ENCODE measurements at regions of chr20 and their contacts with region 1.

Region 1: DNA sequence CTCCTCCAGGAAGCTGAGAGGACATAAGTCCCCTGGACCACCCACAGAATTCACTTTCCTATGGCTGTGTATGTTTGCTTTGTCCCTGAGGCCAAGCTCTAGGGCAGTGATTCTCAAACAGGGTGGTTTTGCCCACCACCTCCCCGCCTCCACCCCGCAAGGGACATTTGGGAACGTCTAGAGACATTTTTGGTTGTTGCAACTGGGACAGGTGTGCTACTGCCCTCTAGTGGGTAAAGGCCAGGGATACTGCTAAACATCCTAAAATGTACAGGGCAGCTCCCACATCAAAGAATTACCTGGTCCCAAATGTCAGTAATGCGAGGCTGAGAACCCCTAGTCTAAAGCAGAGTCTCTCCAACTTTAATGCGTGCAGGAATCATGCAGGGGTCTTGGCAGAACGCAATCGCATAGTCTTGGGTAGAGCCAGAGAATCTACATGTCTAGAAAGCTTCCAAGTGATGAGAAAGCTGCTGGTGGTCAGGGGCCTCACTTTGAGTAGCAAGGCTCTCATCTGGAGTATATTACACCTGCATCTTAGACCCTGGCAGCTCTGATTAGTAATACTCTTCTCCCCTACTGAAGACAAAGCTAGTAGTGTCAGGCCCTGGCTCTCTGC is 5.1 kb downstream of the KCNS1 start:
- DNase-seq: no peak
- H3K4me3 ChIP-seq: no peak overlapping the region
- H3K27ac ChIP-seq: no peak overlapping the region
- H3K4me1 ChIP-seq: peaks cover 0 to 17% (median 14%) of the 10 kb centered on the region in 4 donors
- H3K27me3 ChIP-seq: peaks cover 16 to 51% (median 29%) of the 10 kb centered on the region in 3 donors
- CTCF ChIP-seq: peak in 3 of 4 experiments; percentile 41 to 74 (median 42)
- EP300 ChIP-seq: no peak
- POLR2A ChIP-seq: no peak

Region 2: GRCh38 chr20:45011108-45011526 is 84.7 kb before region 1 on chr20:
- intact Hi-C with region 1: loop called (anchors 2 kb)
- DNase-seq: no peak
- H3K4me3 ChIP-seq: no peak overlapping the region
- H3K27ac ChIP-seq: no peak overlapping the region
- H3K4me1 ChIP-seq: peaks cover 0 to 13% (median 5%) of the 10 kb centered on the region in 4 donors
- H3K27me3 ChIP-seq: no peaks in the 10 kb centered on the region
- CTCF ChIP-seq: peak; percentile 25 to 61 (median 48)
- EP300 ChIP-seq: no peak
- POLR2A ChIP-seq: no peak

Region 3: GRCh38 chr20:45044084-45044573 is 51.7 kb before region 1 on chr20:
- intact Hi-C with region 1: loop called (anchors 1 kb)
- DNase-seq: no peak
- H3K4me3 ChIP-seq: no peak overlapping the region
- H3K27ac ChIP-seq: no peak overlapping the region
- H3K4me1 ChIP-seq: peaks cover 0 to 23% (median 10%) of the 10 kb centered on the region in 4 donors
- H3K27me3 ChIP-seq: no peaks in the 10 kb centered on the region
- CTCF ChIP-seq: peak in 3 of 4 experiments; percentile 55 to 83 (median 78)
- EP300 ChIP-seq: no peak
- POLR2A ChIP-seq: no peak

Region 4: DNA sequence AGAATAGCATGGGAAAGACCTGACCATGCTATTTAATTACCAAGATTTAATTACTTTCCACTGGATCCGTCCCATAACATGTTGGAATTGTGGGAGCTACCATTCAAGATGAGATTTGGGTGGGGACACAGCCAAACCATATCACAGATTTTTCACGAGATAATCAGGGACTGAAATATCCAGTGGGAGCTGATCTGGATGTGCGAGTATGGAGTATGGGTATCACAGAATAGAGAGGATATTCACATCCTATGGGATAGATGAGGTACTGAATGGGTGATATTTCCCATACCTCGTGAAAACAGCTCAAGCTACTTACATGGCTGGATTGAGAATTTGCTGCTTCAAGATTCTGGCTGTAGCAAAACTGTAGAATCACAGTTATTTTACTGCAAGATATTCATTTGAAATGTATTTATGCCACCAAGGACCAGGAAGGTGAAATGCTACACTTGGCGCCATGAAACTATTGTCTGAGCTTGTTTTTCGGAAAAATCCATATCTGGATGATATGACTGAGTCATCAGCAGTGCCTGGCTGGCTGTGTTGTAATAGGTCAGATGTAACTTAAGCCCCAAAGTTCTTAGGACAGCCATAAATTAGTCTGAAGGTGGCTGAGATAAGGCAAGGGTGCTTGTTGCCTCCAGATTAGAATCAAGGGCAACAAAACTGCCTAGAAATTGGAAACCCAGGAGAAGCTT is 24.8 kb before region 1 on chr20:
- intact Hi-C with region 1: no loop called
- DNase-seq: no peak
- H3K4me3 ChIP-seq: no peak overlapping the region
- H3K27ac ChIP-seq: no peak overlapping the region
- H3K4me1 ChIP-seq: peaks cover 0 to 11% (median 3%) of the 10 kb centered on the region in 4 donors
- H3K27me3 ChIP-seq: no peaks in the 10 kb centered on the region
- CTCF ChIP-seq: no peak
- EP300 ChIP-seq: no peak
- POLR2A ChIP-seq: no peak

Region 5: GRCh38 chr20:45489083-45489531 is 393.2 kb after region 1 on chr20:
- intact Hi-C with region 1: no loop called
- DNase-seq: no peak
- H3K4me3 ChIP-seq: no peak overlapping the region
- H3K27ac ChIP-seq: no peak overlapping the region
- H3K4me1 ChIP-seq: no peaks in the 10 kb centered on the region
- H3K27me3 ChIP-seq: no peaks in the 10 kb centered on the region
- CTCF ChIP-seq: no peak
- EP300 ChIP-seq: no peak
- POLR2A ChIP-seq: no peak